Right ventricle myocardium inferior (tissue), 1 donor: ENCODE measurements at regions of chr11 and their contacts with region 1.

Region 1: GRCh38 chr11:118928108-118928870 is 2.6 kb upstream of the BCL9L start:
- DNase-seq: peak; percentile 86
- ATAC-seq: peak; percentile 77

Region 2: DNA sequence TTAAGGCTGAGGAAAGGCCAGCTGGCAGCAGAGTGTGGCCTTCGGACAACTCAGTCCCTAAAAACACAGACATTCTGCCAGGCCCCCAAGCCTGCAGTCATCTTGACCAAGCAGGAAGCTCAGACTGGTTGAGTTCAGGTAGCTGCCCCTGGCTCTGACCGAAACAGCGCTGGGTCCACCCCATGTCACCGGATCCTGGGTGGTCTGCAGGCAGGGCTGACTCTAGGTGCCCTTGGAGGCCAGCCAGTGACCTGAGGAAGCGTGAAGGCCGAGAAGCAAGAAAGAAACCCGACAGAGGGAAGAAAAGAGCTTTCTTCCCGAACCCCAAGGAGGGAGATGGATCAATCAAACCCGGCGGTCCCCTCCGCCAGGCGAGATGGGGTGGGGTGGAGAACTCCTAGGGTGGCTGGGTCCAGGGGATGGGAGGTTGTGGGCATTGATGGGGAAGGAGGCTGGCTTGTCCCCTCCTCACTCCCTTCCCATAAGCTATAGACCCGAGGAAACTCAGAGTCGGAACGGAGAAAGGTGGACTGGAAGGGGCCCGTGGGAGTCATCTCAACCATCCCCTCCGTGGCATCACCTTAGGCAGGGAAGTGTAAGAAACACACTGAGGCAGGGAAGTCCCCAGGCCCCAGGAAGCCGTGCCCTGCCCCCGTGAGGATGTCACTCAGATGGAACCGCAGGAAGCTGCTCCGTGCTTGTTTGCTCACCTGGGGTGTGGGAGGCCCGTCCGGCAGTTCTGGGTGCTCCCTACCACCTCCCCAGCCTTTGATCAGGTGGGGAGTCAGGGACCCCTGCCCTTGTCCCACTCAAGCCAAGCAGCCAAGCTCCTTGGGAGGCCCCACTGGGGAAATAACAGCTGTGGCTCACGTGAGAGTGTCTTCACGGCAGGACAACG is 32.9 kb before region 1 on chr11:
- intact Hi-C with region 1: loop called (anchors 5 kb)
- DNase-seq: no peak
- ATAC-seq: no peak